ENCODE measurements at regions of chr19 and their contacts with region 1.

Region 1: GRCh38 chr19:18023622-18024251 is 15.8 kb downstream of the ARRDC2 start:
- DNase-seq: peak; percentile 48 to 93 (median 82)
- ATAC-seq: peak; percentile 75
- H3K4me3 ChIP-seq: peak overlapping the region in 1 of 2 experiments; percentile 24
- H3K4me3 Mint-ChIP-seq: peak overlapping the region; percentile 67
- H3K27ac ChIP-seq: peak overlapping the region; percentile 68 to 70
- H3K27ac Mint-ChIP-seq: peak overlapping the region; percentile 94
- H3K4me1 ChIP-seq: peaks cover 42% of the 10 kb centered on the region
- H3K4me1 Mint-ChIP-seq: peaks cover 56% of the 10 kb centered on the region
- H3K27me3 ChIP-seq: no peaks in the 10 kb centered on the region
- H3K27me3 Mint-ChIP-seq: no peaks in the 10 kb centered on the region
- CTCF ChIP-seq: no peak

Region 2: DNA sequence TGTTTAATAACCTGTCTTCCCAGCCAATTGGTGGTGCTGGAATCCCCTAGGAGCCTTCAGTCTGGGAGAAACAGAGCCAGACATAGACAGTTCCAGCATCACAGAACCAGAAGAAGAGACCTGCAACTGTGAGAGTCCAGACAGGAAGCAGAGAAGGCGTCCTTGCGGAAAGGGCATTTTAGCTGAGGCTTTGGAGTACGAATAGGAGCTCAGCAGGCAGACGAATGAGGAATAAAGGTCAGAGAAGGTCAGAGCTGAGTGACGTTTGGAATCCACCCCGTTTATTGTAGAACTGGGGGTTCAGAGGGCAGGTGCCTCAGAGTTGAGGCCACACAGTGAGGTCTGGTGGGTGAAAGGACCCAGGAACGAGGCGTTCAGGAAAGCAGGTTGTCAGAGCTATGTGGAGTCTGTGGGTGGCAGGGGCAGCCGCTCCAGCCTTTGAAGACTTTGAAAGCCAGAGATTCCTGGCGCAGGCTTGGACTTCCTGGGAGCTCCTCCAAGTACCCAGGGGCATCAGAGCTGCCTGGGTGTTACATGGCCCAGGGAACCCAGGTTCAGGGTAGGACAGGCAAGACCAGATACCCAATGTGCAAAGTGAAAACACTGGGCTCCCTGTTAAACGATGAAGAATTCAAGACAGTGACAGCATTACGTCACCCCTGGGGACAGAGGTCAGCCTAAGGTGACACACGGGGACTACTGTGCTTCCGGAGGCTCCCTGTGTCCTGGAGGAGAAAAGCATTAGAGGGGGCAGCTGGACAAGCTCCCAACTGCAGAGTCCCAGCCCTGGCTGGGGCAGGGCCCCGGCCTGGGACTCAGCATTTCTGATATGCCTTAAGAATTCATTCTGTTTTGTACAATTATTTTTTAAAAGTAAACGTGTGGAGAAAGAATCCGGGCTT is 10.3 kb before region 1 on chr19:
- CTCF ChIA-PET with region 1: interaction called, 7 read pairs
- POLR2A ChIA-PET with region 1: interaction called, 16 read pairs
- intact Hi-C with region 1: loop called (anchors 2 kb)
- DNase-seq: peak in 1 of 9 experiments; percentile 52
- ATAC-seq: peak; percentile 27
- H3K4me3 ChIP-seq: peak overlapping the region in 1 of 2 experiments; percentile 35
- H3K4me3 Mint-ChIP-seq: peak overlapping the region; percentile 73
- H3K27ac ChIP-seq: peak overlapping the region; percentile 49 to 56
- H3K27ac Mint-ChIP-seq: peak overlapping the region; percentile 97
- H3K4me1 ChIP-seq: peaks cover 69% of the 10 kb centered on the region
- H3K4me1 Mint-ChIP-seq: peaks cover 63% of the 10 kb centered on the region
- H3K27me3 ChIP-seq: no peaks in the 10 kb centered on the region
- H3K27me3 Mint-ChIP-seq: no peaks in the 10 kb centered on the region
- CTCF ChIP-seq: no peak

Region 3: DNA sequence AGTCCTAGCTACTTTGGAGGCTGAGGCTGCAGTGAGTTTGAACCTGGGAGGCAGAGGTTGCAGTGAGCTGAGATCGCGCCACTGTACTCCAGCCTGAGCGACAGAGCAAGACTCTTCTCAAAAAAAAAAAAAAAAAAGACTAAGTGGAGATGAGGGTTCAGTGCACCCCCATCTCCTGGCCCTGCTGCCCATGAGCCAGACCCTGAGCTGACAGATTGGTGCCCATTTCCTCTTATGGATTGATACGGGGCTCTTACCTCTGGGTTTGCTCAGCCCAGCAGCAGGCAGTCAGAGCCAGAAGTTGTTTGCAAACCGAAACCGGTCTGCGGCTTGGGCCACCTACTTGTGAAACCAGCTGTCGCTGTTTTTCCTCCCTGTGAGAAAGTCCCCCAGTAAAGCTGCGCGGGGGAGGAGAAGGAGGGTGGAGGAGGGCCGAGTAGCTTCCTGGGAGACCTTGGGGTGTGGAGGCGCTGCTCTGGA is 21.1 kb after region 1 on chr19:
- CTCF ChIA-PET with region 1: interaction called, 4 read pairs
- POLR2A ChIA-PET with region 1: interaction called, 13 read pairs
- intact Hi-C with region 1: loop called in 1 of 2 experiments (anchors 2 kb)
- DNase-seq: peak; percentile 68 to 96 (median 87)
- ATAC-seq: peak; percentile 91
- H3K4me3 ChIP-seq: peak overlapping the region; percentile 44
- H3K4me3 Mint-ChIP-seq: peak overlapping the region; percentile 79
- H3K27ac ChIP-seq: peak overlapping the region; percentile 55 to 61
- H3K27ac Mint-ChIP-seq: peak overlapping the region; percentile 95
- H3K4me1 ChIP-seq: peaks cover 33% of the 10 kb centered on the region
- H3K4me1 Mint-ChIP-seq: peaks cover 43% of the 10 kb centered on the region
- H3K27me3 ChIP-seq: no peaks in the 10 kb centered on the region
- H3K27me3 Mint-ChIP-seq: no peaks in the 10 kb centered on the region
- CTCF ChIP-seq: no peak

Region 4: GRCh38 chr19:18070181-18070580 is 46.4 kb after region 1 on chr19:
- CTCF ChIA-PET with region 1: no interaction called
- POLR2A ChIA-PET with region 1: no interaction called
- intact Hi-C with region 1: no loop called
- DNase-seq: no peak
- ATAC-seq: no peak
- H3K4me3 ChIP-seq: no peak overlapping the region
- H3K4me3 Mint-ChIP-seq: no peak overlapping the region
- H3K27ac ChIP-seq: no peak overlapping the region
- H3K27ac Mint-ChIP-seq: no peak overlapping the region
- H3K4me1 ChIP-seq: peaks cover 8% of the 10 kb centered on the region
- H3K4me1 Mint-ChIP-seq: peaks cover 15% of the 10 kb centered on the region
- H3K27me3 ChIP-seq: no peaks in the 10 kb centered on the region
- H3K27me3 Mint-ChIP-seq: no peaks in the 10 kb centered on the region
- CTCF ChIP-seq: no peak

Measured in CD8-positive, alpha-beta T cell (primary cell).